Activated CD8-positive, alpha-beta T cell treated with anti-CD3 and anti-CD28 coated beads, Interleukin-2, amount 10 ng/mL, durations not matched to agents 7 days and 5 days (primary cell): ENCODE measurements at regions of chr20 and their contacts with region 1.

Region 1: GRCh38 chr20:53594068-53595017 is 704 bp upstream of the ZNF217 start:
- DNase-seq: peak; percentile 97
- ATAC-seq: peak; percentile 80
- H3K4me3 Mint-ChIP-seq: peak overlapping the region; percentile 88
- H3K27ac Mint-ChIP-seq: peak overlapping the region; percentile 96
- H3K4me1 Mint-ChIP-seq: peaks cover 46% of the 10 kb centered on the region
- H3K27me3 Mint-ChIP-seq: no peaks in the 10 kb centered on the region

Region 2: GRCh38 chr20:53527196-53527595 is 67.1 kb before region 1 on chr20:
- CTCF ChIA-PET with region 1: no interaction called
- POLR2A ChIA-PET with region 1: no interaction called
- DNase-seq: no peak
- ATAC-seq: no peak
- H3K4me3 Mint-ChIP-seq: no peak overlapping the region
- H3K27ac Mint-ChIP-seq: no peak overlapping the region
- H3K4me1 Mint-ChIP-seq: no peaks in the 10 kb centered on the region
- H3K27me3 Mint-ChIP-seq: no peaks in the 10 kb centered on the region

Region 3: GRCh38 chr20:53578492-53579222 is 15.7 kb before region 1 on chr20:
- CTCF ChIA-PET with region 1: interaction called, 6 read pairs
- POLR2A ChIA-PET with region 1: interaction called, 56 read pairs
- DNase-seq: peak; percentile 84
- ATAC-seq: peak; percentile 35
- H3K4me3 Mint-ChIP-seq: peak overlapping the region; percentile 80
- H3K27ac Mint-ChIP-seq: peak overlapping the region; percentile 81
- H3K4me1 Mint-ChIP-seq: peaks cover 87% of the 10 kb centered on the region
- H3K27me3 Mint-ChIP-seq: no peaks in the 10 kb centered on the region

Region 4: GRCh38 chr20:53623454-53624211 is 29.3 kb after region 1 on chr20:
- CTCF ChIA-PET with region 1: interaction called, 5 read pairs
- POLR2A ChIA-PET with region 1: interaction called, 39 read pairs
- DNase-seq: peak; percentile 56
- ATAC-seq: peak; percentile 75
- H3K4me3 Mint-ChIP-seq: peak overlapping the region; percentile 72
- H3K27ac Mint-ChIP-seq: peak overlapping the region; percentile 97
- H3K4me1 Mint-ChIP-seq: peaks cover 56% of the 10 kb centered on the region
- H3K27me3 Mint-ChIP-seq: no peaks in the 10 kb centered on the region

Region 5: GRCh38 chr20:53708129-53708968 is 114.0 kb after region 1 on chr20:
- CTCF ChIA-PET with region 1: interaction called, 4 read pairs
- POLR2A ChIA-PET with region 1: interaction called, 11 read pairs
- DNase-seq: peak; percentile 68
- ATAC-seq: peak; percentile 66
- H3K4me3 Mint-ChIP-seq: peak overlapping the region; percentile 49
- H3K27ac Mint-ChIP-seq: peak overlapping the region; percentile 97
- H3K4me1 Mint-ChIP-seq: peaks cover 73% of the 10 kb centered on the region
- H3K27me3 Mint-ChIP-seq: no peaks in the 10 kb centered on the region

Region 6: DNA sequence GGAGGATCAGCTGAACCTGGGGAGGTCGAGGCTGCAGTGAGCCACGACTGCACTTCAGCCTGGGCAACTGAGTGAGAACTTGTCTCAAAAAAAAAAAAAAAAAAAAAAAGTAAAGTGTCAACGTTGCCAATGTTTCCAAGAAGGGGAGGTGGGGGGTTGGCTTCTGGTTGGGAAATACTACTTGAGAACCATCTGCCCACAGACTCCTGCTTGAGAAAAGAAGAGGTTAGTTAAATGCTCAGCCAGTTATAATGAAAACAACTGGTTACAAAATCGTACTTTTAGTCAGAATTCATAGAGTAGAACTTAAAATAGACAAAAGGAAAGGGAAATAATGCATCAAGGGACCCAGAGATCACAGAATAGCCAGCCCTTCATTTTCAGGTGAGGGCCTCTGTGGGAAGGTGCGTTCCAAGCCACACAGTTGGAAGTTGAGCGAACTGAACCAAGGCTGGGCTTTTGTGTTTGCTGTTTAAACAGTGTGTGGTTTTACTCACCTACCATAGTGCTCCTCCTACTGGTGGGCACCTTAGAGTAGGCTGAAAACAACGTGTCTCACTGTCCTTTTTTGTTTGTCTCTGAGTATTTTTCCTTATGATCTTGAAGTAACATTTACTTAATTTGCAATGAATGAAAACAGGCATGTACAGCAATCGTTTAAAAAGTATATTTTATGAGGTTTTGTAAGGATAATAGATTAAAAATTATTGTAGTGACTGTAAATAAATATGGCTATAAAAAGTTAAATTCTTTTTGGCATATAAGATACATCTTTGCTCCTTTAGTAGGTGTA is 275.3 kb after region 1 on chr20:
- CTCF ChIA-PET with region 1: interaction called, 4 read pairs
- POLR2A ChIA-PET with region 1: interaction called, 10 read pairs
- DNase-seq: peak; percentile 87
- ATAC-seq: peak; percentile 76
- H3K4me3 Mint-ChIP-seq: peak overlapping the region; percentile 34
- H3K27ac Mint-ChIP-seq: peak overlapping the region; percentile 76
- H3K4me1 Mint-ChIP-seq: peaks cover 86% of the 10 kb centered on the region
- H3K27me3 Mint-ChIP-seq: no peaks in the 10 kb centered on the region